BJ (cell line): ENCODE measurements at regions of chr17 and their contacts with region 1.

Region 1: DNA sequence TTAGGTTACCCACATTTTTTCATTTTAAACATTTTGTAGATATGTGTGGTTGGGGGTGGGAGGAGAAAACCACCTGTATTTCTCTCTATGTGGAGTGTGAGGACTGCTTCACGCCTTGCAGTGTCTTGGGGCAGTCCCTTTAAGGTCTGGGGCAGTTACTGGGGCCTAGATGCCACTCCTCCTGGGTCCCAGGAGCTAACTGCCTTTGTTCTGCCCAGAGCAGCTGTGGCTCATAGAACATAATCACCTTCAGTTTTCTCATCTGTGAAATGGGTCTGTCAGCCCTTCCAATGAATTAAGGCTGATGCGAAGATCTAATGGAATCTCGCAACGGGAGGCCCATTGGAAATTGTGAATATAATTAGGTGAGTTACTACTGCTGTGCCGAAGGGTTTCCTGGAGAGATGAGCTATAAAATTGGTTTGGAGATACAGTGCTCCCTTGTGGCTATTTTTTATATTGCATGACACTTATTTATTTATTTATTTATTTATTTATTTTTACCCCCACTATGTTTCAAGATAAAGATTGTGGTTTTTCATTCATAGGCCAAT is 22.9 kb downstream of the DHRS7C start:
- DNase-seq: no peak
- H3K4me3 ChIP-seq: no peak overlapping the region
- H3K27me3 ChIP-seq: no peaks in the 10 kb centered on the region
- CTCF ChIP-seq: peak; percentile 41; the same call in 1 of the 2 replicates

Region 2: GRCh38 chr17:9729034-9729650 is 39.3 kb before region 1 on chr17:
- CTCF ChIA-PET with region 1: interaction called, 14 read pairs
- POLR2A ChIA-PET with region 1: no interaction called
- DNase-seq: peak; percentile 6
- H3K4me3 ChIP-seq: no peak overlapping the region
- H3K27me3 ChIP-seq: no peaks in the 10 kb centered on the region
- CTCF ChIP-seq: peak; percentile 99

Region 3: DNA sequence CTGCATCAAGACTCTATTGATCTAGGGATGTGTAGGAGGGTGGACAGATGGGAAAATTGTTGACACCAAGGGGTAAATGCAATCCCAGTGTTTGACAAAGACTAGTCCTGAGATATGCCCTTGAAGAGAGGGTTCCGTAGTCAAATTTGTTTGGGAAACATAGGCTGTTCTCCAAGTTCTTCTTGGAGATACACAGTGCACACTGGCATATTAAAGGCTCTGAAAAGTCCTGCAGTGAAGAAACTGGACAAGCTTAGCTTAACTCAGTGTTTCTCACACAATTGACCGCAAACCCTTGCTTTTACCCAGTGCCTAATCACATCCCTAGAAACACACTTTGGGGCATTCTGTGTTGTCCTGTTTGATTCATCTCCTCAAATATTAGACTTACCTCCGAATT is 12.1 kb after region 1 on chr17:
- CTCF ChIA-PET with region 1: no interaction called
- POLR2A ChIA-PET with region 1: no interaction called
- DNase-seq: no peak
- H3K4me3 ChIP-seq: no peak overlapping the region
- H3K27me3 ChIP-seq: no peaks in the 10 kb centered on the region
- CTCF ChIP-seq: no peak